Tibial artery (tissue), 4 donors: ENCODE measurements at regions of chr14 and their contacts with region 1.

Region 1: DNA sequence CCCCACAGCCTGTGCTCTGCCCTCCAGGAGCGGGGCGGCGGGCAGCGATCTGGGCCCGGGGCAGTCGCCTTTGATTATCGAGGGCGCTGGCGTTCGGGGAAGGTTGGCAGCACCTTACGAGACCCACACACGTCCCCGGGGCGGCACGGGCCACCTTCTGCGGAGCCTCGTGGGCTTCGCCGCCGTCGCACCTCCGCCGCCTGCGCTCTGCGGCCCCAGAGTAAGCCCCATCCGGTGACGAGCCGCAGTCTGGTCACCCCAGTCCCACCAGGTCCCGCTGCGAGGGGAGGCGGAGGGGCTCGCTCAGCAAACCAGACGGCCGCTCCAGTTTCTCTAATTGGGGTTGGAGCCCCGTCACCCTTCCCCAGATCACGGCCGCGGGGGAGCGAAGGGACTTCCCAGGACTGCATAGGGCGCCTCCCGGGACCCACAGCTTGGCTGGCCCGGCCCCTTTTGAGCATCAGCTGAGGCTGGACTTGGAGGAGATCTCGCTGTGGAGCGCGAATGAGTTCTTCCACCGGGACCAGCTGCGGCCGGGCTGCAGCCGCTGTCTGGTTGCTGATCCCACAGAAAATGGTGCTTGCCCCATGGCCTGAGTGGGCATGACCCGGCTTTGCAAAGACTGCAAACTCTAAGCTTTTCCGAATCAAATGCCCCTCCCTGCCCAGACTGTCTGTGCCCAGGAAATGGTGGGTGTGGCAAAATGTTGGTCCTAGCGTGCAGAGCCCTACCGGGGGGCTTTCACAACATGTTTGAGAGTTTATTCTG is 560 bp downstream of the LGALS3 start:
- DNase-seq: peak; percentile 79 to 87
- H3K4me3 ChIP-seq: peak overlapping the region; percentile 83 to 90
- H3K27ac ChIP-seq: peak overlapping the region; percentile 94 to 96
- H3K4me1 ChIP-seq: peaks cover 0 to 53% (median 30%) of the 10 kb centered on the region in 4 donors
- H3K27me3 ChIP-seq: no peaks in the 10 kb centered on the region
- CTCF ChIP-seq: no peak

Region 2: GRCh38 chr14:55051426-55052268 is 78.0 kb before region 1 on chr14 and contains the start of gene MAPK1IP1L:
- intact Hi-C with region 1: no loop called
- DNase-seq: peak; percentile 83 to 96
- H3K4me3 ChIP-seq: peak within 1 kb of the TSS; percentile 91 to 94
- H3K27ac ChIP-seq: peak within 1 kb of the TSS; percentile 99 to 100
- H3K4me1 ChIP-seq: peaks cover 0 to 50% (median 16%) of the 10 kb centered on the region in 4 donors
- H3K27me3 ChIP-seq: no peaks in the 10 kb centered on the region
- CTCF ChIP-seq: peak; percentile 100

Region 3: DNA sequence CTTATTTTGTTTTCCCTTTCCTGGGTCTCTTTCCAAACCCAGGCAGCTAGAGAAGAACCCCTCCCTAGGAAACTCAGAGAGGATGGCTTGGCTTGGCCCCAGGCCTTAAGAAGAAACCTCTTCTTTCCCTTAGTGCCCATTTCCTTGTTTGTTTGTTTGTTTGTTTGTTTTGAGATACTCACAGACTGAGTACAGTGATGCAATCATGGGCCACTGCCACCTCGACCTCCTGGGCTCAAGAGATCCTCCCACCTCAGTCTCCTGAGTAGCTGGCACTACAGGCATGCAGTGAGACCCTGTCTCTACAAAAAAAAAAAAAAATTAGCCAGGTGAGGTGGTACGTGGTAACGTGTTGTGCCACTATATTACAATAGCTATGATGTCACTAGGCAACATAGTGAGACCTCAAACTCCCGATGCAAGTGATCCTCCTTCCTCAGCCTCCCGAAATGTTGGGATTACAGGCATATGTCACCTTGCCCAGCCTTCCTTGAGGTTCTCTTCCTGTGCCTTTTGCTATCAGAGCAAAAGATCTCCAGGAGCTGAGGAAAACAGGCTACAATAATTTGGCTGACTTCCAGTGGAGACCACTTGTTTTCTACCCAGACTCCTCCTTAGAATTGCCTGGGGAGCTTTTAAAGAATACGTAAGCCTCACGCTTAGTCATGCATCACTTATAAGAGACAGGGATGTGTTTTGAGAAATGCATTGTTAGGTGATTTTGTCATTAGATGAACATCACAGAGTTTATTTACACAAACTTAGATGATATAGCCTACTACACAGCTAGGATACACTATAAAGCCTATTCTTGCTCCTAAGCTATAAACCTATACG is 35.1 kb before region 1 on chr14:
- intact Hi-C with region 1: loop called (anchors 5 kb)
- DNase-seq: no peak
- H3K4me3 ChIP-seq: no peak overlapping the region
- H3K27ac ChIP-seq: no peak overlapping the region
- H3K4me1 ChIP-seq: peaks cover 0 to 10% (median 6%) of the 10 kb centered on the region in 4 donors
- H3K27me3 ChIP-seq: no peaks in the 10 kb centered on the region
- CTCF ChIP-seq: no peak